ENCODE measurements at regions of chr1 and their contacts with region 1.

Region 1: GRCh38 chr1:205061665-205062069 is 18.7 kb downstream of the CNTN2 start:
- DNase-seq: peak; percentile 97
- ATAC-seq: peak; percentile 86
- H3K4me3 ChIP-seq: no peak overlapping the region
- H3K27ac ChIP-seq: no peak overlapping the region
- H3K4me1 ChIP-seq: no peaks in the 10 kb centered on the region
- H3K27me3 ChIP-seq: peaks cover 8% of the 10 kb centered on the region; the same call in 1 of the 2 replicates
- CTCF ChIP-seq: peak; percentile 99

Region 2: DNA sequence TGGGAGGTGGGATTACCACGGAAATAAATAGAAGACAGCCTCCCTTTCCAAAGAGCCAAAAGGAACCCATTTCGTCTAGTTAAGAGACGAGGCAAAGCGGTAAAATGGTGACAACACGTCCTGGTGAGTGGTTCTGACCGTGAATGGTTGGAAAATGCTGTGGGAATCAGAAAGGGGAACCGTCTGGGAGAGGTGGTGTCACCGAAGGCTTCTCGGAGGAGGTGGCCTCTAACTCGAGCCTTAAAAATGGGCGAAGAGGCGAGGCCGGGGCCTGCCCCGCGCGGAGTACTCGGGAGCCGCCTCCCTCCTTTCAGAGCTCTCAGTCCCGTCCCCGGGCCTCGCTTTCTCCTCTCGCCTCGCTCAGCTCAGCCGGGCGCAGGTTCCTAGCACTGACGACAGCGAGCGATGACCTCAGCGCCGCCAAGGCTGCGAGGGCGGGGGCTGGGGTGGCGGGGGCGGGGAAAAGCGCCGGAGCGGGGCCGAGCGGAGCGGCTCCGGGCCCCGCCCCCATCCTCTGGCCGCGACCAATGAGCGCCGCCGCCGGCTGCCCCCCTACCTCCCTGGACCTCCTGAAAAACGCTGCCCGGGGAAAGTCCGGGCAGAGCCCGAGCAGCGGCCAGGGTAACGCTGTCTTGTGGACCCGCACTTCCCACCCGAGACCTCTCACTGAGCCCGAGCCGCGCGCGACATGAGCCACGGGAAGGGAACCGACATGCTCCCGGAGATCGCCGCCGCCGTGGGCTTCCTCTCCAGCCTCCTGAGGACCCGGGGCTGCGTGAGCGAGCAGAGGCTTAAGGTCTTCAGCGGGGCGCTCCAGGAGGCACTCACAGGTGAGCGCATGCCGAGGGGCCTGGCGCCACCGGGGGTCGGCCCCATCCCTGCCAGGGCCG is 1756.5 kb before region 1 on chr1 and contains the start of gene BTG2:
- CTCF ChIA-PET with region 1: interaction called, 14 read pairs
- POLR2A ChIA-PET with region 1: no interaction called
- intact Hi-C with region 1: no loop called
- DNase-seq: peak; percentile 85
- ATAC-seq: peak; percentile 86
- H3K4me3 ChIP-seq: peak within 1 kb of the TSS; percentile 85
- H3K27ac ChIP-seq: no peak within 1 kb of the TSS
- H3K4me1 ChIP-seq: peaks cover 15% of the 10 kb centered on the region
- H3K27me3 ChIP-seq: peaks cover 11% of the 10 kb centered on the region; the same call in 1 of the 2 replicates
- CTCF ChIP-seq: no peak
- total RNA-seq, gene BTG2: 2.2 and 2.4 TPM in 2 replicates

Region 3: GRCh38 chr1:204891860-204892259 is 169.8 kb before region 1 on chr1:
- CTCF ChIA-PET with region 1: no interaction called
- POLR2A ChIA-PET with region 1: no interaction called
- intact Hi-C with region 1: no loop called
- DNase-seq: no peak
- ATAC-seq: no peak
- H3K4me3 ChIP-seq: no peak overlapping the region
- H3K27ac ChIP-seq: no peak overlapping the region
- H3K4me1 ChIP-seq: no peaks in the 10 kb centered on the region
- H3K27me3 ChIP-seq: peaks cover 91% of the 10 kb centered on the region
- CTCF ChIP-seq: no peak

Region 4: DNA sequence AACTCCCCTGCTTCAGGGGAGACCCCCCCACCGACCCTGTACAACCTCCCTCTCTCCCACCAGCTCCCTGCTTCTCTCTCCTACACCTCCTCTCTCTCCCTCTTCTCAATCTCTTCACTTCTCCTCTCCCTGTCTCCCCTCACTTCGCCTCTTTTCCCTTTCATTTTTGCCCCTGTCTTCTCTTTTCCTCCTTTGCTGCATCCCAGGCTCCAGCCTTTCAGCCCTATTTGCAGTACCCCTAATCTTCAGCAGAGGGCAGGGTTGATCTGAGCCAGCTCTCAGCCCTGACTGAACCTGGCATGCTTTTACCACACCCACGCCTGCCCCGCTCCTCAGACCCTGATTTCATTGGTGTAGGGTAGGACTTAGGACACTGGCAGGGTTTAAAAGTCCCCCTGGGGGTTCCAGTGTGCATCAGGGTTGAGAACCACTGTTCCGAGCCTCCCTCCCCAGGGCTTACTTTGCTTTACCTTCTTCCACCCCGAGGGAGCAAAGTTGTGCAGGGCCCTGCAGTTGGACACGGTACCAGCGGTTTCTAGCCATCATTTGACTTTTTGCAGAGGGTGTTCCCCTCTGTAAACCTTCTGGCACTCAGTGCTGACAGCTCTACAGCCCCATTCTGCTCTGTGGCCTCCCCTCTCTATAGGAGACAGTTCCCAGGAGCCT is 86.0 kb before region 1 on chr1:
- CTCF ChIA-PET with region 1: interaction called, 18 read pairs
- POLR2A ChIA-PET with region 1: no interaction called
- intact Hi-C with region 1: loop called (anchors 1 kb)
- DNase-seq: peak; percentile 89
- ATAC-seq: peak; percentile 82
- H3K4me3 ChIP-seq: no peak overlapping the region
- H3K27ac ChIP-seq: no peak overlapping the region
- H3K4me1 ChIP-seq: peaks cover 5% of the 10 kb centered on the region
- H3K27me3 ChIP-seq: peaks cover 26% of the 10 kb centered on the region
- CTCF ChIP-seq: peak; percentile 98

Region 5: GRCh38 chr1:204989266-204990058 is 72.2 kb before region 1 on chr1:
- CTCF ChIA-PET with region 1: interaction called, 62 read pairs
- POLR2A ChIA-PET with region 1: interaction called, 3 read pairs
- intact Hi-C with region 1: loop called (anchors 1 kb)
- DNase-seq: peak; percentile 94
- ATAC-seq: peak; percentile 82
- H3K4me3 ChIP-seq: no peak overlapping the region
- H3K27ac ChIP-seq: no peak overlapping the region
- H3K4me1 ChIP-seq: no peaks in the 10 kb centered on the region
- H3K27me3 ChIP-seq: peaks cover 89% of the 10 kb centered on the region
- CTCF ChIP-seq: peak; percentile 100

Region 6: GRCh38 chr1:205074513-205074912 is 12.8 kb after region 1 on chr1:
- CTCF ChIA-PET with region 1: interaction called, 12 read pairs
- POLR2A ChIA-PET with region 1: no interaction called
- intact Hi-C with region 1: no loop called
- DNase-seq: no peak
- ATAC-seq: no peak
- H3K4me3 ChIP-seq: no peak overlapping the region
- H3K27ac ChIP-seq: no peak overlapping the region
- H3K4me1 ChIP-seq: peaks cover 10% of the 10 kb centered on the region; the same call in 1 of the 2 replicates
- H3K27me3 ChIP-seq: no peaks in the 10 kb centered on the region
- CTCF ChIP-seq: no peak

Measured in PC-3 (cell line).